ENCODE measurements at regions of chr20 and their contacts with region 1.

Region 1: DNA sequence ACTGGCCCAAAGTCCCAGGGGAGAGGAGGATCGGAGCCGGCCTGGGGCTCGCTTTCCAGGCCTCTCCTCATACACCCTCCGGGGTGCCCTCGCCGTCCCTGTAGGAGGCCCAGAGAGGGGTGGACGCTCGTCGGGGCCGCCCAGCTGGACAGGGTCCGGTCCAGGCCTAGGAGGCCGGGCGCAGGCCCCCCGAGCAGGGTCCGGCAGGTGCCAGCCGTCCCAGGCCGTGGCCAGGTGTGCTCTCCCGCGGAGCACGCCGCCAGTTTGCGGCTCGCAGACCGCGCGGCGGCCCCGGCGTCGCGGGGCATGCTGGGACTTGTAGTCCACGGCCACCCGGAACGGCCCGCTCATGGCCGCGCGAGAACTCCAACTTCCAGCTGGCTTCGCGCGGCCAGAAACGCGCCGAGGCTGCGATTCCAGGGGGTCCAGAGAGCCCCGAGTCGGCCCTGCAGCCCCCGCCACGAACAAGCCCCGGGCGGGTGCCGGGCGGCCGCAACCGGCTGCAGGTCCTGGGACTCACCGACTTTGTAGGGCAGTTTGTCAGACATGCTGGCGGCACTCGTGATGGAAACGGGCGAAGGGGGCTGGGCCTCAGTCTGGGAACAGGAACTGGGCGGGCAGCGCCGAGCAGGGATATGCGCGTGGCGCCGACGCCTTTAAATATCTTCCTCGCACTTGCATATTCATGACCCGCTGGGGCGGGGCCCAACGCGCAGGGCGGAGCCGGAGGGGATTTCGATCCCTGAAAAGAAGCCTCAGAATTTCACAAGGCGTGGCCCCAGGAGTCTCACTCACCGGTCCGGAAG is at the start of gene AHCY:
- DNase-seq: peak; percentile 99
- ATAC-seq: peak; percentile 98
- total RNA-seq, gene AHCY: 69.5 TPM

Region 2: GRCh38 chr20:33994222-33994913 is 308.6 kb before region 1 on chr20:
- intact Hi-C with region 1: no loop called
- DNase-seq: peak; percentile 95
- ATAC-seq: peak; percentile 49

Region 3: DNA sequence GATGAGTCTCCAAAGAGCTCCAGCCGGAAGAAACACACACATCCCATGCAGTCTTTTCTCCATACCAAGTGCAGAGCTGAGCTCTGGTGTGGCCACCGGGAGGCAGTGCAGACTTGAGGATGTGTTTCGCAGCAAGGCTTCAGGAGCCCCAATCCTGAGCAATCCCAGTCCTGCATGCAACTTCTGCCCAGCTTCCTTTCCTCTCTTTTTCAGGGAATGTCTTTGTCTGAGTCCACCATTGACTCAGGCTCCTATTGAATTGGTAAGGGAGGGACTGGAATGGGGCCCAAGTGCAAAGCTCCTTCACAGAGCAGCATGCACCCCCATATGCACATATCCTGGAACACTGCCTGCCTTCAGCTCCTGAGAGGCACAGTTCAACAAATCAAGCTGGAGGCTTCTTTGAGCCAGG is 112.2 kb before region 1 on chr20:
- intact Hi-C with region 1: loop called (anchors 5 kb)
- DNase-seq: peak; percentile 80
- ATAC-seq: peak; percentile 96

Region 4: DNA sequence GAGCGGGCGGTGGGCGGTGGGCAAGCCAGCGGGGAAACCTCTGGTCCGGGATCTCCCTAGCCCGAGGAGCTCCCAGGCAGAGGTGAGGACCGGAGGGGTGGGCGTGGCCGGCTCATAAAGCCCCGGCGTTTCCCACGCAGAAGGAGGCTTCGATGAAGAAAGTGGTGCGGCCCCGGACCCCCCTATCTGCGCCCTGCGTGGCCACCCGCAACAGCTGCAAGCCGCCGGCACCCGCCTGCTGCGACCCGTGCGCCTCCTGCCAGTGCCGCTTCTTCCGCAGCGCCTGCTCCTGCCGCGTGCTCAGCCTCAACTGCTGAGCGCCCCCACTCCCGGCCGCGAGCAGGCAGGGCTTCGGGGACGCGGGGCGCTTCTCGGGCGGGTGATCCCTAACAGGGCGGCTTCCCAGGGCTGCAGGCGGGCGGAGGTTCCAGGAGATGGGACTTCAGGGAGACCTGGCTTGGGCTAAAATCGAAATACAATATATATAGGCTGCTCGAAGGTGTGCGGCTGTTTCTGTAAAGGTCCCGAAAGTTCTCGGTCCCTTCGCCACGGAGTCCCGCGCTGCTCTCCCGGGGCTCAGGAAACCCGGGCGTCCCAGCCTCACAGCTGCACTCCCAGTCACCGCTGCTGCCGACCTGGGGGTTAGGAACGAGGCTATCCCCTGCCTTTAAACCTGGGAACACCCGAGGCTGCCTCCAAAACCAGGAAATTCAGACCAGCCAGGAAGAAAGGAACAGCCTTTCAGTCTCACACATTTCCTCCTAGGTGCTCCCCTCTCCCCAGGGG is 33.9 kb before region 1 on chr20:
- intact Hi-C with region 1: loop called (anchors 5 kb)
- DNase-seq: no peak
- ATAC-seq: peak; percentile 42